Activated naive CD4-positive, alpha-beta T cell treated with anti-CD3 and anti-CD28 coated beads for 36 hours (primary cell): ENCODE measurements at regions of chr13 and their contacts with region 1.

Region 1: DNA sequence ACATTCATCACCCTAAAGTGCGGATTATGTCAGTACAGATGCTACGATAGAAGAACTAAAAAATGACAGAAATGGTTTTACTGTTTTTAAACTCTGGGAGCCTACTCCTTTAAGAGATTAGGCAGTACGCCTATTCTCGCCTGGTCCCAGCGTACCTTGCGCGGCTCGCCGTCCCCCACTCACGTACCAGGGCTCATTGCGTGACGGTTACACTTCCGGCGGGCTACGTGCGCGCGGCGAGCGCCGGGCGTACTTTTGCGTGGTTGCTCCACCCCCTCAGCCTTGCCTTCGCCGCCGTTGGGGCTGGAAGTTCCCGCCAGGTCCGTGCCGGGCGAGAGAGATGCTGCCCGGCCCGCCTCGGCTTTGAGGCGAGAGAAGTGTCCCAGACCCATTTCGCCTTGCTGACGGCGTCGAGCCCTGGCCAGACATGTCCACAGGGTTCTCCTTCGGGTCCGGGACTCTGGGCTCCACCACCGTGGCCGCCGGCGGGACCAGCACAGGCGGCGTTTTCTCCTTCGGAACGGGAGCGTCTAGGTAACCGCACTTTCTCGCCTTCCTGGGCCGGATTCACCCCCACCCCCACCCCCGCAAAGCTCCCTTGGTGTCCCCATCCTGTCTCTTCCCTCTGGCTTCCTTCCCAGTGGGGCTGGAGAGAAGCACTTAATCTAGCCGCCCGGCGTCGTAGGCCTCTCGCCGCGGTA is at the start of gene NUP58:
- DNase-seq: peak; percentile 96
- H3K4me3 Mint-ChIP-seq: peak within 1 kb of the TSS; percentile 94
- H3K27ac Mint-ChIP-seq: peak within 1 kb of the TSS; percentile 93
- H3K4me1 Mint-ChIP-seq: peaks cover 40% of the 10 kb centered on the region
- H3K27me3 Mint-ChIP-seq: no peaks in the 10 kb centered on the region
- total RNA-seq, gene NUP58: 91.9 to 93.0 TPM

Region 2: DNA sequence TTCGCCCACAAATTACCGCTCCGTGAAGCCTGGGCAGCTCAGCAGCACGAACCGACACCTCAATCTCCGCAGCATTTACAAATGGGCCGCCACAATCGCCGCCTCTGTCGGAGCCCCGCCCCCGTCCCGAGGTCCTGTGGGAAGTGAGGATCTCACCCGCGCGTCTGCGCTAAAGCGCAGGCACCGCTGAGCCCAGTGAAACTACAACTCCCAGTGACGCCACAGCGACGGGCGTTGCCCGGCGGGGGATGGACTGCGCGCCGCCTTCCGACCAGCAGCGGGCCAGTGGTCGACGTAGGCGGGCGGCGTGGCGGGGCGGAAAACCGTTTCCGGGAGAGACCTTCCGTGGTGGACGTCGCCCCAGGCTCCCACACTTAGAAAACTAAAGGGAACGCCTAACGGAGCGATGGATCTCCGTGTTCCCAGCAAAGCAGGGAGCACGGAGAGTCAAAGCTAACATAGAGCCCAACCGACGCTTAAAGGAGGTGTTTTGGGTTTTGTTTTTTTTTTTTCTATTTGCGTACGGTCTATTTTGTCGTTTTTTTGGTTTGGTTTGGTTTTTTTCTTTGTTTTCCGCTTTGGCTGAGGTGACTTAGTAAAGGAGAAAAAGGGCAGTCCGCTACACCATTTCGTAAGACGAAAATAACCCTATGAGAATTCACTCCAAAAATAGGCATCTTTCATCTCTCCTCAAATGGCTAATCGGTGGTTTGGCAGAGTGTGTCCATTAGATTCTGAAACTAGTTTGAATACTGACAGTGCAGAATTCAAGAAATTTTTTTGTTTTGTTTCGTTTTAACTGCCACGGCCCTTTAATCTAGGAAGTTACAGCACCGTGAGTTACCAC is 378.5 kb before region 1 on chr13:
- CTCF ChIA-PET with region 1: no interaction called
- intact Hi-C with region 1: loop called (anchors 1 kb)
- DNase-seq: peak; percentile 96
- H3K4me3 Mint-ChIP-seq: peak overlapping the region; percentile 94
- H3K27ac Mint-ChIP-seq: peak overlapping the region; percentile 85
- H3K4me1 Mint-ChIP-seq: peaks cover 8% of the 10 kb centered on the region
- H3K27me3 Mint-ChIP-seq: no peaks in the 10 kb centered on the region

Region 3: DNA sequence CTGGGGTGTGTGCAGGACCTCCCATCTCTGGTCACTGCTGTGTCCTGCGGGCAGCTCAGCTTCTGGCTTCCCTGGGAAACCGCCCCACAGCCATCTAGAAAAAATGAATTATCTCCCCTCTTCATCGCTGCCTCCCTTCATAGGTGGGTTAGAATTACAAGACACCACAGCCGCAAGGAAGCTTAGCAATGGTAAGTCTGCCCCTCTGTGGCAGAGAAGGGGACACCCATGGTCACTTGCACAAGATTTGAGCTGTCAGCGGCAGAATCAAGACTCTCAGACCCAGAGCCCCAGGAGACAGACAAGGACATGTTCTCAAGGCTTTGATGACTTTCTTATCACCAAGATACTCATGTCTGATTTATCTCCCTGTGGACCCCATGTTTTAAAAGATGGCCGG is 316.4 kb before region 1 on chr13:
- CTCF ChIA-PET with region 1: no interaction called
- intact Hi-C with region 1: no loop called
- DNase-seq: no peak
- H3K4me3 Mint-ChIP-seq: no peak overlapping the region
- H3K27ac Mint-ChIP-seq: no peak overlapping the region
- H3K4me1 Mint-ChIP-seq: no peaks in the 10 kb centered on the region
- H3K27me3 Mint-ChIP-seq: peaks cover 45% of the 10 kb centered on the region

Region 4: DNA sequence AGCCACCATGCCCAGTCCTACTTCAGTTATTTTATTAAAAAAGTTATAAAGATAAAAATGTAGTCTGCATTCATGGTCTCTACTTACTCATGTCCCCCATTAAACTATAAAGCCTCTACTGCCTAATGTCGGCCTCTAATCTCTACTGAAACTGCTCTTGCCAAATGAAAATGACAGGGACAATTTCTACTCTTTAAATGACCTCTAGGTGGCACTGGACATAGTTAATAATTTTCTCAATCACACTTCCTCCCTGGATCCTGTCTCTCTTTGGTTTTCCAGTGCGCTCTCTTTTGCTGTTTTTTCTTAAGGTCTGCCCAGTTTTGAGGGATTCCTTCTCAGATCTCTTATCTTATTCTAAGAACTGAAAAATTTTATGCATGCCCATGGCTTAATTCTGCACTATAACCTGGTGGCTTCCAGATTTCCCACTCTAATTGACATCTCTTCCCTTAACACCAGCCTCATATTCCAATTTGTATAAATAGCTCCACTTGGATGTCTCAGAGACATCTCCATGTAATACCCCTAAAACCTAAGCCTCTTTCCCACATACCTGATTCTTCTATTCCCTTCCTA is 68.5 kb before region 1 on chr13:
- CTCF ChIA-PET with region 1: no interaction called
- intact Hi-C with region 1: loop called (anchors 5 kb)
- DNase-seq: no peak
- H3K4me3 Mint-ChIP-seq: no peak overlapping the region
- H3K27ac Mint-ChIP-seq: no peak overlapping the region
- H3K4me1 Mint-ChIP-seq: peaks cover 2% of the 10 kb centered on the region
- H3K27me3 Mint-ChIP-seq: peaks cover 4% of the 10 kb centered on the region

Region 5: GRCh38 chr13:25267715-25268114 is 33.8 kb before region 1 on chr13:
- CTCF ChIA-PET with region 1: no interaction called
- intact Hi-C with region 1: loop called (anchors 1 kb)
- DNase-seq: no peak
- H3K4me3 Mint-ChIP-seq: no peak overlapping the region
- H3K27ac Mint-ChIP-seq: no peak overlapping the region
- H3K4me1 Mint-ChIP-seq: peaks cover 6% of the 10 kb centered on the region
- H3K27me3 Mint-ChIP-seq: no peaks in the 10 kb centered on the region

Region 6: DNA sequence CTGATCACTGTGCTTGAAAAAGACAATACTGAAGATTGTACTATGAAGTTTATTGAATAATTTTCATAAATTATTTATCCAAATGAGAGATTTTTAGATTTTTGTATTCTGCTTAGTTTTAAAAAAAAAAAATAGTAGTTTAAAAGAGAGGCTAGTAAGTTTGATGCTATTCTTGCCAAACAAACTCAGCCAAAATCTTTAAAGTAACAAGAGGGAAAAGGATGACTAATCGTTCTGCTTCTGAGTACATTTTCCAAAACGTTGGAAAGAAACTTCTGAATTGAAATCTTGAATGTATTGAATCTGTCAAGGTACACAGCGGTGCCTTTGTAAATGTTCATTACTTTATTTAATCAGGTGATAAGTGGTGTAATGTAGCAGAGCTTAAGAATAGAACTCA is 34.4 kb after region 1 on chr13:
- CTCF ChIA-PET with region 1: no interaction called
- intact Hi-C with region 1: loop called (anchors 5 kb)
- DNase-seq: no peak
- H3K4me3 Mint-ChIP-seq: no peak overlapping the region
- H3K27ac Mint-ChIP-seq: no peak overlapping the region
- H3K4me1 Mint-ChIP-seq: peaks cover 6% of the 10 kb centered on the region
- H3K27me3 Mint-ChIP-seq: no peaks in the 10 kb centered on the region

Region 7: DNA sequence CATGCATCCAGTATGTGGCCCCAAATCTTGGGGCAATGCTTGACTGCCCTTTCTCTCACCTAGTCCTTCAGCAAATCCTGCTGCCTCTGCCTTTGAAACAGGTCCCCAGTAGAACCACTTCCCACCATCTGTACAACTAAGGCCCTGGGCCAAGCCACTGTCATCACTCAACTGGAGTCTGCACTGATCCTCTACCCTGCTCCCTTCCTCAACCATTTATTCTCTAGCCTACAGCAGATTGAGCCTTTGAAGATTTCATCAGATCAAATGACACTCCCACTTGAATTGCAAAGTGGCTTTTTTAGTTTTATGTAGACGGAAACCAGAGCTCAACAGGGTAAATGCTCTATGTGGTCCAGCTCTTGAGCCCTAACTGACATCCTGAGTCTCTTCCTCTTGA is 113.7 kb after region 1 on chr13:
- CTCF ChIA-PET with region 1: no interaction called
- intact Hi-C with region 1: no loop called
- DNase-seq: no peak
- H3K4me3 Mint-ChIP-seq: no peak overlapping the region
- H3K27ac Mint-ChIP-seq: no peak overlapping the region
- H3K4me1 Mint-ChIP-seq: no peaks in the 10 kb centered on the region
- H3K27me3 Mint-ChIP-seq: peaks cover 37% of the 10 kb centered on the region

Region 8: DNA sequence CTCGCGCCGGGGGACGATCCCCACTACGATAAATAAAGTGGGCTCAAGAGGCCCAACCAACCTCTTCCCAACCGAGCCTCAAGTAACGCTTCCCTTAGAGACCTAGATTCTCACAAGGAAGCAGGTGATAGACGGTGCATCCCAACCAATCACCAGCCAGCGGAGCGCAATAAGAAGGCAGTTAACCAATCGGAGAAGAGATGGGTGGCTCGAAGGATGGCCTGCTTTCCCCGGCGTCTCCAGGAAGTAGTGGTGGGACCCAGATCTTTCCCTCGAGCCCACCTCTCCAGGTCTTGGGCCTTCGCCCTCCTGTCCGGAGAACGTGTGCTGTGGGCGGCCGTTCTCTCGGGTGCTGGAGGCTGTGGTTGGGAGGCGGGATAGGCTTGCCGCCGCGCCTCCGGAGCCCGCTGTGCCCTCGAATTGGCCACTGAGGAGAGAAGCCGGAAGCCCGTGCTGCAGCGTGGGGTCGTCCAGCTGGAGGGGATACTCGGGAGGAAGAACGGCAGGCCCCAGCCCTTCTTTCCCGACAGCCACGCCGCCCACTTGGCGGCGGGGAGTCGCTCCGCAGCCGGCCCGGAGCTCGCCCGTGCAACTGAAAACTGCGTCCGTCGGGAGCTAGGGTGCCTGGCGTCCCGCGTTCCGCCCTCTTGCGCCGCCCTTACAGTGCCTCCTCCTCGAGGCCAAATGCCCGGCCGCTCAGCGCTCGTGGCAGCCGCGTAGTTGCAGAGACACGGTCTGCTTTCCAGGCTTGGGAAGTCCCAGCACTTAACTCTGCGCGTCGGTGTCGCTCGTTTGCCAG is 920.4 kb after region 1 on chr13 and contains the start of gene RNF6:
- CTCF ChIA-PET with region 1: no interaction called
- intact Hi-C with region 1: loop called (anchors 1 kb)
- DNase-seq: peak; percentile 92
- H3K4me3 Mint-ChIP-seq: peak within 1 kb of the TSS; percentile 91
- H3K27ac Mint-ChIP-seq: peak within 1 kb of the TSS; percentile 100
- H3K4me1 Mint-ChIP-seq: peaks cover 30% of the 10 kb centered on the region
- H3K27me3 Mint-ChIP-seq: peaks cover 2% of the 10 kb centered on the region
- total RNA-seq, gene RNF6: 38.2 to 39.4 TPM